CD8-positive, alpha-beta memory T cell (primary cell): ENCODE measurements at regions of chr4 and their contacts with region 1.

Region 1: GRCh38 chr4:83267121-83267829 is 17.3 kb downstream of the COQ2 start:
- DNase-seq: no peak
- H3K4me3 ChIP-seq: no peak overlapping the region
- H3K4me3 Mint-ChIP-seq: no peak overlapping the region
- H3K27ac ChIP-seq: no peak overlapping the region
- H3K27ac Mint-ChIP-seq: no peak overlapping the region
- H3K4me1 ChIP-seq: no peaks in the 10 kb centered on the region
- H3K4me1 Mint-ChIP-seq: peaks cover 6 to 24% (median 12%) of the 10 kb centered on the region in 3 donors
- H3K27me3 ChIP-seq: no peaks in the 10 kb centered on the region
- H3K27me3 Mint-ChIP-seq: no peaks in the 10 kb centered on the region

Region 2: GRCh38 chr4:82721819-82722423 is 545.4 kb before region 1 on chr4:
- CTCF ChIA-PET with region 1: no interaction called
- POLR2A ChIA-PET with region 1: no interaction called
- DNase-seq: peak in 1 of 5 donors; percentile 3
- H3K4me3 ChIP-seq: no peak overlapping the region
- H3K4me3 Mint-ChIP-seq: no peak overlapping the region
- H3K27ac ChIP-seq: no peak overlapping the region
- H3K27ac Mint-ChIP-seq: peak overlapping the region in 2 of 8 donors; percentile 32 to 58
- H3K4me1 ChIP-seq: no peaks in the 10 kb centered on the region
- H3K4me1 Mint-ChIP-seq: peaks cover 0 to 5% (median 3%) of the 10 kb centered on the region in 3 donors
- H3K27me3 ChIP-seq: no peaks in the 10 kb centered on the region
- H3K27me3 Mint-ChIP-seq: no peaks in the 10 kb centered on the region

Region 3: DNA sequence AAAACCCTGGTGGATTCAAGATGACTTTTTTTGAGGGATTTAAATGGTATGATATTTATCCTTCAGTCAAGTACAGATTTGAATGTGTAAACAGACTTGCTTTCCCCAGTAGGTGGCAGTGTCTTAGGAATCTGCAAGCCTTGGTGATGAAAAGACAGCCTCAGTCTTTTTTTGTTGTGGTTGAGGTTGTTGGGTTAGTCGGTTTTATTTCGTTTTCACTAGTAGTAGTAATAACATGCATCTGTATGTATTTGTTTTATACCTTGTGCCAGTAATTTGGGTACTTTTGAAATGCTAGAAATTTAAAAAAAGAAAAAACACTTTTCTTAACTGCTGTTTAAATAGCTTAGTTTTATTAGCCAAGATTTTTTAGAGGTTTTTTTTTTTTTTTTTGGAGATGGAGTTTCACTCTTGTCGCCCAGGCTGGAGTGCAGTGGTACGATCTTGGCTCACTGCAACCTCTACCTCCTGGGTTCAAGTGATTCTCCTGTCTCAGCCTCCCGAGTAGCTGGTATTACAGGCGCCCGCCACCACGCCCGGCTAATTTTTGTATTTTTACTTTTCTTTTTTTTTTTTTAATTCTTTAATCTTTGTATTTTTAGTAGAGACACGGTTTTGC is 193.1 kb before region 1 on chr4:
- CTCF ChIA-PET with region 1: interaction called, 68 read pairs
- POLR2A ChIA-PET with region 1: no interaction called
- DNase-seq: peak; percentile 10 to 88 (median 71)
- H3K4me3 ChIP-seq: no peak overlapping the region
- H3K4me3 Mint-ChIP-seq: peak overlapping the region; percentile 19 to 82 (median 75)
- H3K27ac ChIP-seq: no peak overlapping the region
- H3K27ac Mint-ChIP-seq: peak overlapping the region in 7 of 8 donors; percentile 38 to 72 (median 66)
- H3K4me1 ChIP-seq: no peaks in the 10 kb centered on the region
- H3K4me1 Mint-ChIP-seq: peaks cover 6 to 16% (median 12%) of the 10 kb centered on the region in 3 donors
- H3K27me3 ChIP-seq: no peaks in the 10 kb centered on the region
- H3K27me3 Mint-ChIP-seq: no peaks in the 10 kb centered on the region